ENCODE measurements at regions of chr17 and their contacts with region 1.

Region 1: DNA sequence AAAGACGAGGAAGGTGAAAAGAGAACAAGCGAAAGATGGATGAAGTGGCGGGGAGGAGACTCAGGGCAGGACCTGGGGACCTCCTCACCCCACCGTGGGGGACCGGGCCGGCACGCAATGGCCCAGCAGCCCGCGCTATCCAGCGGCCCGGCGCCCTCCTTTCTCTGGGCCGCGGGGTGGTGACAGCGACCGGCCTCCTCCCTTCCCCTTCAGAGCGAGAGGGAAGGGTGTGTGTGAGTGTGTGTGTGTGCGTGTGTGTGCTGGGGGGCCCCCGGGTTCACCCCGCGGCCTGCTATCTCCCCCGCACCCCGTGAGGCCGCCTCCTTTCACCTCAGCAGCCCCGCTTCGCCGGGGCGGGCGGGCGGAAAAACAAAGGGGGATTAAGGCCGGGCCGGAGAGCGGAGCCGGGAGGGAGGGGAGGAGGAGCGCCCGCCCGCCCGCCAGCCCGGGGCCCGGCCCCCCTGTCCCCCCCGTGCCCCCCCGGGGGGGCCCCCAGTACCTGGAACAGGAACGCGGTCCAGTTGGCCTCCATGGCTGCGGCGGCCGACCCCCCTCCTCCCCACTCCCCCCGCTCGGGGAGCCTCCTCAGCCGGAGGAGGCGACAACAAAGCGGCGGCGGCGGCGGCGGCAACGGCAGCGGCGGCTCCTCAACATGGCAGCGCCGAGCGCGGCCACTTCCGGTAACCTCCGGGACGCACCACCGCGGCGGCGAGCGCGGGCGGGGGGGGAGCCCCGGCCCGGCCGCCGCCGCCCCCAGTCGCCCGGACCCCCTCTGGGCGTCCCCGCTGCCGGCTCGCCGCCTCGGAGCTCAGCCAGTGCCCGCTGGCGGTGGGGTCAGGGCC is at the start of gene VEZF1:
- DNase-seq: no peak
- H3K4me3 ChIP-seq: peak within 1 kb of the TSS; percentile 80
- CTCF ChIP-seq: no peak

Region 2: DNA sequence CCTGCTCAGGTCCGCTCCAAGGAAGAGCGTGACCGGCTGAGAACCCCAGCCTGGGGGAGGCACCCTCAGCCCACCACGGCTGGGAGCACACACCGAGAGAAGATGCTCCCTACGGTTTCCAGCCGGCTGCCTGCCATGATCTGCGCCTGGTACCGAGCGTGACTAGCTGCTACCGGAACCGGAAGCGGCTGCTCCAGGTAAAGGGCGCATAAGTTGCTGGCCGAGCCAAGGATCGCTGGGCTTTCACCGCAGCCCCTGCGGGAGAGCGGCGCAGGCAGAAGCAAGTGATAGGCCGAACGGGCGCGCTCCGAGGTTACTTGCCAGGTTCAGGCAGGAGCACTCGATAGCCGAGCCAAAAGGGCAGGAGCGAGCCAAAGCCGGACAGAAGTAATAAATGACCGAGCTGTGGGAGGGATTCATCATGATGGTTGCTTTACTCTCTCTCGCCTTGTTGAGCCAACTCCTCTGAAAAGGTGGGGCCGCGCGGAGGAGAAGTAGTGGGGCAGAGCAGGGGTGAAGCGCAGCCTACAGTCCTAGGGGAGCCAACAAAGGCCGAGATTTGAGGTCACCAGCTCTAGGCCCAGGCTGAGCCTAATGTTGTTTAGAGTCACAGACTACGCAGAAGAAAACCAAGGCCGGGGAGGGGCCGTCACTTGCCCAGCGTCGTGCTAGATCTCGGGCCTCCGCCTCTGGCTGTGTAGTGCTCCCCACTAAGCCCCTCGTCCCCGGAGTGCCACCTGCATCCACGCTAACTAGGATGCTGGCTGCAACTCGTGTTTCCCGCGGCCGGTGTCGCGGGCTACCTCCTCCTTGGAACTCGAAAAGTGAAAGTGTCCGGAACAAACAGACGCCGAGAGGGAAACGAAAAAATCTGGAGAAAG is 137.7 kb before region 1 on chr17 and contains the start of gene MRPS23:
- CTCF ChIA-PET with region 1: interaction called, 1,361 read pairs
- POLR2A ChIA-PET with region 1: interaction called, 11 read pairs
- DNase-seq: peak; percentile 95
- H3K4me3 ChIP-seq: peak within 1 kb of the TSS; percentile 99
- CTCF ChIP-seq: no peak

Region 3: GRCh38 chr17:57868007-57868909 is 119.5 kb before region 1 on chr17:
- CTCF ChIA-PET with region 1: interaction called, 1,361 read pairs
- POLR2A ChIA-PET with region 1: interaction called, 6 read pairs
- DNase-seq: peak; percentile 44
- H3K4me3 ChIP-seq: no peak overlapping the region; the same call in 1 of the 2 replicates
- CTCF ChIP-seq: peak; percentile 64

Region 4: DNA sequence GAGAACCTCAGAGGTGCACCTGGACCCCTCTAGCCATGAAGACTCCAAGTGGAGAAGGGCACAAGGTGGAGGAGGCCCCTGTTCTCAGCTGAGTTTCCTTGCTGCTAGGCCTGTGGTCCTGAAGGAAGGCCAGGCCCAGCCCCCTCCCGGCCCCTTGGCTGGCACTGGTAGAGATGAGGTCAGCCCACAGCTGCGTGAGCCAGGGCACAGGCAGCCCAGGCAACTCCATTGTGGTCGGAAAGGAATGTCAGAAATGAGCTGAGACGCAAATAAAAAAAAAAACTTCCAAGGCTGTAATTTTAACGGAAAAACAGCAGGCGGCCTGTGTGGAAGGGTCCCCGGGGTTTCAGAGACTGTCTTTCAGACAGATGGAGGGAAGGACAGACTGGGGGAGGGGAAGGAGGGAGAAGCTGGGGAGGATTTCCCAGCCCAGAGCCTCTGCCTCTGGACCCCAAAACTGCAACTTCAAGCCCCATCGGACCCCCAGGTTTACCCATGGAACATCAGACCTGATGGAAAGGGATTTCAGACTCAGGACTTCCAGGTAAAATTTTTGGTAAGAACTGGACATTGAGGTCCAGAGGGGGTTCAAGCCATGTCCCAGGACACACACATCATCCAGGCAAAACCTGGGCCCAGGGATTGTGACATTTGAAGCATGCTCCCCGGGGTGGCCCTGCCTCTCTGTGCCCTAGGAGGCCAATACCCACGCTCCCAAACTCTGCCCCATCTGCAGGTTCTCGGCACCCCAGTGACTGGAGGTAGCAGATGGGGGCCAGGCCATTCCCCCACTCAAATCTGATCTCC is 112.3 kb before region 1 on chr17:
- CTCF ChIA-PET with region 1: interaction called, 1,361 read pairs
- POLR2A ChIA-PET with region 1: interaction called, 14 read pairs
- DNase-seq: peak; percentile 94
- H3K4me3 ChIP-seq: peak overlapping the region; percentile 31
- CTCF ChIP-seq: peak; percentile 60

Measured in AG04449 (cell line).